Common myeloid progenitor, CD34-positive (primary cell): ENCODE measurements at regions of chr11 and their contacts with region 1.

Region 1: GRCh38 chr11:77127232-77127911 is 674 bp upstream of the MYO7A start:
- DNase-seq: peak; percentile 41 to 68 (median 62)
- H3K4me3 ChIP-seq: peak overlapping the region in 6 of 7 experiments; percentile 32 to 65 (median 52)
- H3K27ac ChIP-seq: no peak overlapping the region
- H3K4me1 ChIP-seq: peaks cover 0 to 25% (median 22%) of the 10 kb centered on the region in 4 experiments
- H3K27me3 ChIP-seq: peaks cover 0 to 8% (median 4%) of the 10 kb centered on the region in 5 experiments

Region 2: GRCh38 chr11:76872959-76873827 is 254.2 kb before region 1 on chr11:
- CTCF ChIA-PET with region 1: no interaction called
- POLR2A ChIA-PET with region 1: no interaction called
- DNase-seq: no peak
- H3K4me3 ChIP-seq: no peak overlapping the region
- H3K27ac ChIP-seq: no peak overlapping the region
- H3K4me1 ChIP-seq: no peaks in the 10 kb centered on the region
- H3K27me3 ChIP-seq: no peaks in the 10 kb centered on the region

Region 3: GRCh38 chr11:77113382-77114088 is 13.8 kb before region 1 on chr11:
- CTCF ChIA-PET with region 1: interaction called, 16 read pairs
- POLR2A ChIA-PET with region 1: no interaction called
- DNase-seq: peak; percentile 46 to 64 (median 56)
- H3K4me3 ChIP-seq: no peak overlapping the region
- H3K27ac ChIP-seq: no peak overlapping the region
- H3K4me1 ChIP-seq: no peaks in the 10 kb centered on the region
- H3K27me3 ChIP-seq: no peaks in the 10 kb centered on the region

Region 4: GRCh38 chr11:77140231-77140851 is 13.0 kb after region 1 on chr11:
- CTCF ChIA-PET with region 1: interaction called, 59 read pairs
- POLR2A ChIA-PET with region 1: no interaction called
- DNase-seq: no peak
- H3K4me3 ChIP-seq: no peak overlapping the region
- H3K27ac ChIP-seq: no peak overlapping the region
- H3K4me1 ChIP-seq: peaks cover 0 to 23% (median 15%) of the 10 kb centered on the region in 4 experiments
- H3K27me3 ChIP-seq: peaks cover 0 to 34% (median 17%) of the 10 kb centered on the region in 5 experiments

Region 5: GRCh38 chr11:77147668-77148321 is 20.4 kb after region 1 on chr11:
- CTCF ChIA-PET with region 1: interaction called, 59 read pairs
- POLR2A ChIA-PET with region 1: no interaction called
- DNase-seq: peak; percentile 64 to 91 (median 90)
- H3K4me3 ChIP-seq: peak overlapping the region in 3 of 7 experiments; percentile 40 to 65 (median 52)
- H3K27ac ChIP-seq: no peak overlapping the region
- H3K4me1 ChIP-seq: peaks cover 11 to 51% (median 43%) of the 10 kb centered on the region in 4 experiments
- H3K27me3 ChIP-seq: peaks cover 0 to 10% (median 0%) of the 10 kb centered on the region in 5 experiments

Region 6: GRCh38 chr11:77154381-77155081 is 27.2 kb after region 1 on chr11:
- CTCF ChIA-PET with region 1: interaction called, 59 read pairs
- POLR2A ChIA-PET with region 1: no interaction called
- DNase-seq: peak in 2 of 3 donors; percentile 62 to 74
- H3K4me3 ChIP-seq: peak overlapping the region in 2 of 7 experiments; percentile 7 to 48
- H3K27ac ChIP-seq: no peak overlapping the region
- H3K4me1 ChIP-seq: peaks cover 10 to 64% (median 53%) of the 10 kb centered on the region in 4 experiments
- H3K27me3 ChIP-seq: peaks cover 0 to 3% (median 0%) of the 10 kb centered on the region in 5 experiments

Region 7: GRCh38 chr11:77175869-77176539 is 48.6 kb after region 1 on chr11:
- CTCF ChIA-PET with region 1: interaction called, 240 read pairs
- POLR2A ChIA-PET with region 1: no interaction called
- DNase-seq: peak in 2 of 3 donors; percentile 60 to 66
- H3K4me3 ChIP-seq: peak overlapping the region in 2 of 7 experiments; percentile 10 to 28
- H3K27ac ChIP-seq: no peak overlapping the region
- H3K4me1 ChIP-seq: peaks cover 2 to 36% (median 31%) of the 10 kb centered on the region in 4 experiments
- H3K27me3 ChIP-seq: no peaks in the 10 kb centered on the region

Region 8: GRCh38 chr11:77547863-77548551 is 420.6 kb after region 1 on chr11:
- CTCF ChIA-PET with region 1: interaction called, 10 read pairs
- POLR2A ChIA-PET with region 1: no interaction called
- DNase-seq: peak; percentile 61 to 85 (median 80)
- H3K4me3 ChIP-seq: no peak overlapping the region
- H3K27ac ChIP-seq: no peak overlapping the region
- H3K4me1 ChIP-seq: no peaks in the 10 kb centered on the region
- H3K27me3 ChIP-seq: no peaks in the 10 kb centered on the region